CD4-positive, alpha-beta T cell (primary cell): ENCODE measurements at regions of chr2 and their contacts with region 1.

Region 1: GRCh38 chr2:64045938-64046337 is 26.7 kb upstream of the VPS54 start:
- DNase-seq: no peak
- ATAC-seq: no peak
- H3K4me3 ChIP-seq: no peak overlapping the region
- H3K4me3 Mint-ChIP-seq: no peak overlapping the region
- H3K27ac ChIP-seq: no peak overlapping the region
- H3K27ac Mint-ChIP-seq: no peak overlapping the region
- H3K4me1 ChIP-seq: peaks cover 6% of the 10 kb centered on the region
- H3K4me1 Mint-ChIP-seq: peaks cover 15% of the 10 kb centered on the region
- H3K27me3 ChIP-seq: no peaks in the 10 kb centered on the region
- H3K27me3 Mint-ChIP-seq: no peaks in the 10 kb centered on the region
- CTCF ChIP-seq: no peak

Region 2: DNA sequence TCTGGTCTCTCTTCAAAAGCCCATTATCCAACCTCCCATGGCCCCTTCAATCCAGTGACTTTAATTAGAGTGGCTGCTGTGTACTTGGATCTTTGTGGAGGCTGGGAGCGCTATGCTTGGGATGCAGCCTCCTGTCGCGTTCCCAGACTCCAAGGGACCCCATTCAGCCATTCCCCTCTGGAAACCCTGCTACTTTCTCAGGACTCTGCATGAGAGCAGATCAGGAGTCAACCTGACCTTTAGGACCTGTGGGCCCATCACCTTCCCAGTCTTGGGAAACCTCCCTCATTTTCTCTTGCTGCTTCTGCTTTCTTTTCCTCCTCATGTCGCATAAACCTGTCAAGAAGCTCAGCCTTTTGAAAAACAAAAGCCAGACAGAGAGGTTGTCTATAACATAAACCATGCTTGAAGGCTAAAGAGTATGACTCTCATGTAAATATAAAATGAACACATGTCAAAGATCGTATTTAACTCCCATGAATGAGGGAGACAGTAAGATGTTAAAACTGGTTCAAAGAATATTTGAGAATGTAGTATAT is 241.3 kb after region 1 on chr2:
- CTCF ChIA-PET with region 1: no interaction called
- POLR2A ChIA-PET with region 1: no interaction called
- intact Hi-C with region 1: no loop called
- DNase-seq: no peak
- ATAC-seq: no peak
- H3K4me3 ChIP-seq: no peak overlapping the region
- H3K4me3 Mint-ChIP-seq: no peak overlapping the region
- H3K27ac ChIP-seq: no peak overlapping the region
- H3K27ac Mint-ChIP-seq: no peak overlapping the region
- H3K4me1 ChIP-seq: peaks cover 14% of the 10 kb centered on the region
- H3K4me1 Mint-ChIP-seq: no peaks in the 10 kb centered on the region
- H3K27me3 ChIP-seq: no peaks in the 10 kb centered on the region
- H3K27me3 Mint-ChIP-seq: no peaks in the 10 kb centered on the region
- CTCF ChIP-seq: no peak

Region 3: GRCh38 chr2:64562148-64562784 is 516.3 kb after region 1 on chr2:
- CTCF ChIA-PET with region 1: interaction called, 3 read pairs
- POLR2A ChIA-PET with region 1: no interaction called
- intact Hi-C with region 1: loop called (anchors 5 kb)
- DNase-seq: peak in 3 of 14 experiments; percentile 56 to 62 (median 62)
- ATAC-seq: peak; percentile 73
- H3K4me3 ChIP-seq: no peak overlapping the region
- H3K4me3 Mint-ChIP-seq: no peak overlapping the region
- H3K27ac ChIP-seq: no peak overlapping the region
- H3K27ac Mint-ChIP-seq: peak overlapping the region; percentile 24
- H3K4me1 ChIP-seq: no peaks in the 10 kb centered on the region
- H3K4me1 Mint-ChIP-seq: peaks cover 42% of the 10 kb centered on the region
- H3K27me3 ChIP-seq: no peaks in the 10 kb centered on the region
- H3K27me3 Mint-ChIP-seq: no peaks in the 10 kb centered on the region
- CTCF ChIP-seq: no peak

Region 4: GRCh38 chr2:64873472-64873924 is 827.6 kb after region 1 on chr2:
- CTCF ChIA-PET with region 1: no interaction called
- POLR2A ChIA-PET with region 1: no interaction called
- intact Hi-C with region 1: loop called (anchors 5 kb)
- DNase-seq: peak; percentile 53 to 86 (median 74)
- ATAC-seq: peak; percentile 98
- H3K4me3 ChIP-seq: peak overlapping the region; percentile 24
- H3K4me3 Mint-ChIP-seq: peak overlapping the region; percentile 4
- H3K27ac ChIP-seq: no peak overlapping the region
- H3K27ac Mint-ChIP-seq: no peak overlapping the region
- H3K4me1 ChIP-seq: peaks cover 9% of the 10 kb centered on the region
- H3K4me1 Mint-ChIP-seq: peaks cover 7% of the 10 kb centered on the region
- H3K27me3 ChIP-seq: no peaks in the 10 kb centered on the region
- H3K27me3 Mint-ChIP-seq: no peaks in the 10 kb centered on the region
- CTCF ChIP-seq: peak; percentile 96